ENCODE measurements at regions of chr17 and their contacts with region 1.

Region 1: GRCh38 chr17:75034236-75034908 is 12.4 kb downstream of the ATP5PD start:
- DNase-seq: peak; percentile 94
- ATAC-seq: peak; percentile 70
- H3K4me3 Mint-ChIP-seq: peak overlapping the region; percentile 91
- H3K27ac Mint-ChIP-seq: peak overlapping the region; percentile 93
- H3K4me1 Mint-ChIP-seq: peaks cover 44% of the 10 kb centered on the region
- H3K27me3 Mint-ChIP-seq: no peaks in the 10 kb centered on the region

Region 2: GRCh38 chr17:74780443-74781238 is 253.7 kb before region 1 on chr17:
- CTCF ChIA-PET with region 1: no interaction called
- DNase-seq: peak; percentile 75
- ATAC-seq: peak; percentile 25
- H3K4me3 Mint-ChIP-seq: peak overlapping the region; percentile 49
- H3K27ac Mint-ChIP-seq: peak overlapping the region; percentile 95
- H3K4me1 Mint-ChIP-seq: peaks cover 77% of the 10 kb centered on the region
- H3K27me3 Mint-ChIP-seq: no peaks in the 10 kb centered on the region

Region 3: GRCh38 chr17:75046582-75047289 is 12.4 kb after region 1 on chr17 and contains the starts of genes ATP5PD and KCTD2:
- CTCF ChIA-PET with region 1: interaction called, 18 read pairs
- DNase-seq: peak; percentile 97
- ATAC-seq: peak; percentile 95
- H3K4me3 Mint-ChIP-seq: peak within 1 kb of the TSS; percentile 98
- H3K27ac Mint-ChIP-seq: peak within 1 kb of the TSS; percentile 92
- H3K4me1 Mint-ChIP-seq: peaks cover 36% of the 10 kb centered on the region
- H3K27me3 Mint-ChIP-seq: no peaks in the 10 kb centered on the region
- total RNA-seq, gene ATP5PD: 188 to 210 TPM
- total RNA-seq, gene KCTD2: 16.8 to 19.1 TPM

Region 4: DNA sequence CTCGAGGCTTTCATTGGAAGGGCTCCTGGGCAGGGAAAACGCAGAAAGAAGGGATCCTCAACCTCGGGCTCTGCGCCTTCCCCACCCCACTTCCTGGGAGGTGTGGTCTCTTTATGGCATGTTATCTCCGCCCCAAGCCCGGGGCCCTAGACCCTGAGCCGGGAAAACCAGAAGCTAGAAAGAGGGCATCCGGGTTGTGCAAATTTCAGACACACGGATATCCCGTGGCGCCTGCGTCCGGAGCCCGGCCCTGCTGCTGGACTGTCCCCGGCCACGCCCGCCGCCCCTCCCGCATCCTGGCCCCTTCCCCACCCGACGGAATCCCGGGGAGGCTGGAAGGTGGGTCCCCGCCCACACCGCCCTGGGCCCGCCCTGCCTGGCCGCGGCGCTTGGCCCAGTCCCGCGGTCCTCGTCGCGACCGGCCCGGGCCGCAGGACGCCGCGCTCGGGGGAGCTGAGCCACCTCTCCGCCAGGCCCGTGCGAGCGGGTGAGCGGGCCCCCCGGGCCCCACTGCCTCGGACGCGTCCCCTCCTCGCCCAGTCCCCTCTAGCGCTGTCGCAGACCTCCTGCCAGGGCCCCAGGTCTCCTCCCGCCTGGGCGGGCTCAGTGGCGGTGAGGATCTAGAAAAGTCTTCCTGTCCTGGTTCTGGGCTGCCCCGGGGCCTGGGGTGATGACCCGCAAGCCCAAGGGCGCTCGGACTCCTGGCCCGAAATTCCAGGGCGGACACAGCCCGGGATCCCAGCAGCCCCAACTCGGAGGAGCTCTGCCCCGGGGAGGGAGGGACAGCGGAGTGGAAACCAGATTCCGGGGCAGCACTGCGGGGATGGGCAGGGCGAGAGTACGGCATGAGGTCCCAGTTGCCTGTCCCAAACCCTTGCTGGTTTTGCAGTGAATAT is 53.4 kb after region 1 on chr17 and contains the start of gene SLC16A5:
- CTCF ChIA-PET with region 1: no interaction called
- DNase-seq: peak; percentile 54
- ATAC-seq: peak; percentile 82
- H3K4me3 Mint-ChIP-seq: peak within 1 kb of the TSS; percentile 66
- H3K27ac Mint-ChIP-seq: no peak within 1 kb of the TSS
- H3K4me1 Mint-ChIP-seq: peaks cover 32% of the 10 kb centered on the region
- H3K27me3 Mint-ChIP-seq: no peaks in the 10 kb centered on the region
- total RNA-seq, gene SLC16A5: 2.3 to 3.2 TPM

Measured in activated CD8-positive, alpha-beta memory T cell treated with anti-CD3 and anti-CD28 coated beads, Interleukin-2, amount 10 ng/mL, durations not matched to agents 7 days and 5 days (primary cell).